Activated CD4-positive, alpha-beta memory T cell treated with anti-CD3 and anti-CD28 coated beads for 36 hours (primary cell): ENCODE measurements at regions of chr5 and their contacts with region 1.

Region 1: DNA sequence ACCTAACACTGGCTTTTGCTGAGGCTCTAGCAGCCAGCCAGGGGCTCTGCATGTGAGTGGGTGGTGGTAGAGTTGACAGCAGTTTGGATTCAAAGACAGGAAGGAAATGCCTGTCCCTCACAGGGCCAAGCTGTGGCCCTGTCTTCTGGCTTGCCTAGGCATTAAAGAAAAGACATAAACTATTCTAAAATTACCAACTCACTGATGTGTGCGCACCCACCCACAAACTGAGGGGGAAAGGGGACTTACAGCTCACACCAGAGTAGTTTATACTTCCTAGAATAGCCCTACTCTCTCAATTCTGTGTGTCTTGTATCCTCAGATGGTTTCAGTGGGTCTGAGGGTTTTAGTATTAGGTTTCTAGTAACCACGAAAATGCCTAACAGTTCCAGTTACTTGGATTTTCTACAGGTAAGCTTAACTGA is 18.3 kb upstream of the IL13 start:
- DNase-seq: peak; percentile 52
- H3K4me3 Mint-ChIP-seq: no peak overlapping the region
- H3K27ac Mint-ChIP-seq: peak overlapping the region; percentile 18
- H3K4me1 Mint-ChIP-seq: peaks cover 76% of the 10 kb centered on the region
- H3K27me3 Mint-ChIP-seq: no peaks in the 10 kb centered on the region

Region 2: DNA sequence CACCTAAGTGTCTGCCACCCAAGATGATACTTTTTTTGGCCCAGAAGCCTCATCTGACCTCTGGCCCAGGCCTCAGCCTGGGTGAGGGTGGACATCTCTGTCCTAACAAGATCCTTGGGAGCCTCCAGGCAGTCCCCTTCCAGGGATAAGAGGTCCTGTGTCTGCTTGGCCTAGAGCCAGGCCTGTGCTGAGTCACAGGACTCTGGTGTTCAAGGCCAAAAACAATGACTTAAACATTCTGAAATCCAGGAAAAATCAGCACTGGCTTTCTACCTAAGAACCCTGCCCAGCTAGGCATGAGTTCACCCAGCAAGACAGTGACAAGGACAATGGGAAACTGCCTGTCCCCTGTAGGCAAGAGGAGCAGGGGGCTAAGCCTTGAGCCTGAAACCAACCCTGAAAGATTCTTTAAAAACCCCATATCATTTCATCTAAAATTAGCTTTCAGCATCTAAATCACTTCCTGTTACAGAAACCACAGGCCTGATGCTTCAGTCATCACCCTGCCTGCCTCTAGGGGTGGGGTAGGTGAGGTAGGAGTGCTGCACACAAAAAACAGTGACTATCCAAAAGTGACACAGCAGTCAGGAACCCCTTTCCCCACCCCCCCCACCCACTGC is 536.3 kb before region 1 on chr5:
- CTCF ChIA-PET with region 1: no interaction called
- POLR2A ChIA-PET with region 1: no interaction called
- intact Hi-C with region 1: loop called (anchors 5 kb)
- DNase-seq: peak; percentile 84
- H3K4me3 Mint-ChIP-seq: peak overlapping the region; percentile 38
- H3K27ac Mint-ChIP-seq: peak overlapping the region; percentile 86
- H3K4me1 Mint-ChIP-seq: peaks cover 74% of the 10 kb centered on the region
- H3K27me3 Mint-ChIP-seq: no peaks in the 10 kb centered on the region

Region 3: DNA sequence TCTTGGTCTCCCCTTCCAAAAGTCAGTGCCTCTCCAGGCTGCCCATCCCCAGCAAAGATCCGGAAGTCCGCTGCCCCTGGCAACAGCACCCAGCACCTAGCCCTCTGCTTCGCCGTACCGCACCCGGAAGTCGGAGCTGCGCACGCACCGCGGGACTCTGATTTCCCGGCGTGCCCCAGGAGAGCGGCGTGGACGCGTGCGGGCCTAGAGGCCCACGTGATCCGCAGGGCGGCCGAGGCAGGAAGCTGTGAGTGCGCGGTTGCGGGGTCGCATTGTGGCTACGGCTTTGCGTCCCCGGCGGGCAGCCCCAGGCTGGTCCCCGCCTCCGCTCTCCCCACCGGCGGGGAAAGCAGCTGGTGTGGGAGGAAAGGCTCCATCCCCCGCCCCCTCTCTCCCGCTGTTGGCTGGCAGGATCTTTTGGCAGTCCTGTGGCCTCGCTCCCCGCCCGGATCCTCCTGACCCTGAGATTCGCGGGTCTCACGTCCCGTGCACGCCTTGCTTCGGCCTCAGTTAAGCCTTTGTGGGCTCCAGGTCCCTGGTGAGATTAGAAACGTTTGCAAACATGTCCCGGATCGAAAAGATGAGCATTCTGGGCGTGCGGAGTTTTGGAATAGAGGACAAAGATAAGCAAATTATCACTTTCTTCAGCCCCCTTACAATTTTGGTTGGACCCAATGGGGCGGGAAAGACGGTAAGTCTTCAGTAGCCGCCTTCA is 82.8 kb before region 1 on chr5 and contains the start of gene RAD50:
- CTCF ChIA-PET with region 1: no interaction called
- POLR2A ChIA-PET with region 1: interaction called, 7 read pairs
- intact Hi-C with region 1: loop called (anchors 5 kb)
- DNase-seq: peak; percentile 96
- H3K4me3 Mint-ChIP-seq: peak within 1 kb of the TSS; percentile 99
- H3K27ac Mint-ChIP-seq: peak within 1 kb of the TSS; percentile 94
- H3K4me1 Mint-ChIP-seq: peaks cover 19% of the 10 kb centered on the region
- H3K27me3 Mint-ChIP-seq: no peaks in the 10 kb centered on the region
- total RNA-seq, gene RAD50: 44.6 to 47.6 TPM

Region 4: GRCh38 chr5:132629230-132629944 is 10.3 kb before region 1 on chr5:
- CTCF ChIA-PET with region 1: no interaction called
- POLR2A ChIA-PET with region 1: no interaction called
- intact Hi-C with region 1: no loop called
- DNase-seq: no peak
- H3K4me3 Mint-ChIP-seq: no peak overlapping the region
- H3K27ac Mint-ChIP-seq: no peak overlapping the region
- H3K4me1 Mint-ChIP-seq: peaks cover 13% of the 10 kb centered on the region
- H3K27me3 Mint-ChIP-seq: no peaks in the 10 kb centered on the region

Region 5: DNA sequence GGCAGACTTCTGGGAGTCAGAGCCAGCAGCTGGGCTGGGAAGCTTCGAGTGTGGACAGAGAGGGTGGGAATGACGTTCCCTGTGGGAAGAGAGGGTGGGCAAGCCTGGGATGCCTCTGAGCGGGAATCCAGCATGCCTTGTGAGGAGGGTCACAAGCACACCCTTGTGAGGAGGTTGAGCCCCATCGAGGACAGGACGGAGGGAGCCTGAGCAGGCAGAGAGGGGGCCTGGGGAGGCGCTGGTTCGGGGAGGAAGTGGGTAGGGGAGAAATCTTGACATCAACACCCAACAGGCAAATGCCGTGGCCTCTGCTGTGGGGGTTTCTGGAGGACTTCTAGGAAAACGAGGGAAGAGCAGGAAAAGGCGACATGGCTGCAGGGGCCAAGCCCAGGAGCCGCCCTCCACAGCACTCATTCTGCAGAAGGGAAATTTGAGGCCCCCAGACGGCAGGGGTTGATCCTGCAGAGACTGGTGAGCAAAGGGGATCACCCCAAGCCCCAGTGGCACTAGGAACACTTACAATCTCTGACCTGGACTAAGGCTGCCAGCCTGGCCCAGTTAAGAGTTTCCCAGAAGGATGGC is 17.1 kb after region 1 on chr5:
- CTCF ChIA-PET with region 1: interaction called, 6 read pairs
- POLR2A ChIA-PET with region 1: interaction called, 14 read pairs
- intact Hi-C with region 1: no loop called
- DNase-seq: no peak
- H3K4me3 Mint-ChIP-seq: peak overlapping the region; percentile 16
- H3K27ac Mint-ChIP-seq: no peak overlapping the region
- H3K4me1 Mint-ChIP-seq: peaks cover 36% of the 10 kb centered on the region
- H3K27me3 Mint-ChIP-seq: peaks cover 32% of the 10 kb centered on the region

Region 6: GRCh38 chr5:132688536-132689339 is 49.0 kb after region 1 on chr5:
- CTCF ChIA-PET with region 1: interaction called, 3 read pairs
- POLR2A ChIA-PET with region 1: no interaction called
- intact Hi-C with region 1: loop called (anchors 2 kb)
- DNase-seq: peak; percentile 36
- H3K4me3 Mint-ChIP-seq: no peak overlapping the region
- H3K27ac Mint-ChIP-seq: peak overlapping the region; percentile 24
- H3K4me1 Mint-ChIP-seq: peaks cover 36% of the 10 kb centered on the region
- H3K27me3 Mint-ChIP-seq: no peaks in the 10 kb centered on the region

Region 7: GRCh38 chr5:132753135-132753987 is 113.6 kb after region 1 on chr5:
- CTCF ChIA-PET with region 1: interaction called, 3 read pairs
- POLR2A ChIA-PET with region 1: interaction called, 3 read pairs
- intact Hi-C with region 1: loop called (anchors 1 kb)
- DNase-seq: peak; percentile 47
- H3K4me3 Mint-ChIP-seq: no peak overlapping the region
- H3K27ac Mint-ChIP-seq: no peak overlapping the region
- H3K4me1 Mint-ChIP-seq: peaks cover 38% of the 10 kb centered on the region
- H3K27me3 Mint-ChIP-seq: no peaks in the 10 kb centered on the region

Region 8: GRCh38 chr5:132979367-132979940 is 339.7 kb after region 1 on chr5:
- CTCF ChIA-PET with region 1: no interaction called
- POLR2A ChIA-PET with region 1: no interaction called
- intact Hi-C with region 1: no loop called
- DNase-seq: no peak
- H3K4me3 Mint-ChIP-seq: no peak overlapping the region
- H3K27ac Mint-ChIP-seq: no peak overlapping the region
- H3K4me1 Mint-ChIP-seq: no peaks in the 10 kb centered on the region
- H3K27me3 Mint-ChIP-seq: no peaks in the 10 kb centered on the region